HCT116 (cell line): ENCODE measurements at regions of chr7 and their contacts with region 1.

Region 1: DNA sequence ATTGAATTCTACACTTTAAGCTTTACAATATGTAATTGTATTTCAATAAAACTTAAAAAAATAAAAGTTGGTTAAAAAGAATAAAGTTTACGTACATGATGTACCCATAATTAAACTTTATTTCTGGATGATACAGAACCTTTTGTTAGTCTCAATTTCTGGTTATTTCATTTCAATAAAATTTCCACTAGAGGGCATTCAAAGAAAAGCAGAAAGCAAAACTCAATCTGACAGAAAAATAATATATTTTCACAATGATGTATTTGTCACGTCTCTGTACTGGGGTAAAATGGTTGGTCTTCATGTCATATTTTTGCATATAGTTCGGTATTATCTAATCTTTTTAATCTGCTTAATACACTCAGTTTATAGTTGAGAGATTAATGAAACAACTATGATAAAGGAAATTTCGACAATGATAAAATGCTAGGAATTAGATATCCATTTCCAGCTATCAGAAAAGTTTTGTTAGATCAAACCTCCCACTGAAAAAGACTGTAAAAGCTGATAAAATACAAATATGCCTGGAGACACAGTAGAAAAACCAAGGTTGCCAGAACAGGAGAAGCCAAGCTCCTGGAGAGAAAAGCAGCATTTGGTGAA is 27.4 kb downstream of the ASZ1 start:
- DNase-seq: no peak
- ATAC-seq: no peak; the same call in 1 of the 2 replicates
- H3K4me3 ChIP-seq: no peak overlapping the region
- H3K27ac ChIP-seq: no peak overlapping the region
- H3K4me1 ChIP-seq: no peaks in the 10 kb centered on the region
- H3K27me3 ChIP-seq: no peaks in the 10 kb centered on the region
- CTCF ChIP-seq: peak; percentile 26 to 65 (median 59); a peak in 4 of 6 replicates
- POLR2A ChIP-seq: no peak
- RAD21 ChIP-seq: peak; percentile 76

Region 2: DNA sequence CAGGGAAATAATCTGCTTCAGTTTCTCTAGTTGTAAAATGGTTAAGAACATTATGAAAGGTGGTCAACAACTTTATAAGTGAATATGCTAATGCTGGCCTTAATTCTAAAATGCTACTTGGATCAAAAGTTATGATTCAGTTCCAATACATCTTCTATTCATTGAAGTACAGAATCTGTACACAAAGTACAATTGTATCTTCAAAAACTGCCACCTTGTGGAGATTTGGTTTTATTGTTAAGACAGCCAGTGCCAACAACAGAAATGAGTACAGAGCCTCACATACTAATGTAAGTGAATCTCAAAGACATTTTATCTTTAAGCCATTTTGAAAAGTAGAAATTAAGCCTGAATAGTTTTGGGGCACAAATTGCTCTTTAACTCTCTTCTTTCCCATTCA is 273.9 kb after region 1 on chr7:
- CTCF ChIA-PET with region 1: no interaction called
- POLR2A ChIA-PET with region 1: no interaction called
- RAD21 ChIA-PET with region 1: interaction called in 1 of 2 experiments, 3 read pairs
- intact Hi-C with region 1: loop called (anchors 2 kb)
- DNase-seq: peak; percentile 24
- ATAC-seq: peak; percentile 77
- H3K4me3 ChIP-seq: no peak overlapping the region
- H3K27ac ChIP-seq: no peak overlapping the region
- H3K4me1 ChIP-seq: no peaks in the 10 kb centered on the region
- H3K27me3 ChIP-seq: no peaks in the 10 kb centered on the region
- CTCF ChIP-seq: peak; percentile 31 to 54 (median 51); a peak in 4 of 6 replicates
- POLR2A ChIP-seq: no peak
- RAD21 ChIP-seq: peak; percentile 56

Region 3: DNA sequence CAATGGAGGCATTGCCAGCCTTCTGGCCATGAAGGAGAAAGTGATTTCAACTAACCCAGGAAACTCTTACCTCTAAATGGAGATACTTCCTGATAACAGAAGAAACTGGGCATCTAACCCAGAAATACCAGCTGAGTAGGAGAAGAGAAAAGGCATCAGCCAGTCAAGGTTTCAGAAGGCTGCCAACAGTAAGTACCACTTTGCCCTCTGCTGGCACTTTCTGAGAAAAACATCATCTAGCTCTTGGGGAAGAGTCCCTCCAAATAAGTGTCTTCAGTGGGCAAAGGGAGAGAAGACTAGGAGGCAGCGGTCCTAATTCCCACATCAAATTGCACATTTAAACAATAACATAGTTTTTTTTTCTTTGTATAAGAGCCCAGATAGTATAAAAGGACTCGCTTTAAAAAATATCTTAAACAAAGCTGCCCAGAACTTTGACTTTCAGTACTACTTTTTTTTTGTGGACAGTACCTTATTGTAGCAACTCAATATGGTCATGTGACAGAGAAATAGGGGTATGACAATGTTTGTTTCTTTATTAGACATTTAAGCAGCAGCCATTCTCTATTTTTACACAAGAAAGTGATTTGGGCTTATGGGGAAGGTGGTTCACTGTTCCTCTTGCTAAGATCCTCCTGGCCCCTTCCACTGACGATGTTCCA is 316.0 kb after region 1 on chr7:
- CTCF ChIA-PET with region 1: interaction called, 18 read pairs
- POLR2A ChIA-PET with region 1: no interaction called
- RAD21 ChIA-PET with region 1: interaction called in 1 of 2 experiments, 3 read pairs
- intact Hi-C with region 1: loop called (anchors 1 kb)
- DNase-seq: peak; percentile 26
- ATAC-seq: peak; percentile 85
- H3K4me3 ChIP-seq: no peak overlapping the region
- H3K27ac ChIP-seq: no peak overlapping the region
- H3K4me1 ChIP-seq: no peaks in the 10 kb centered on the region
- H3K27me3 ChIP-seq: no peaks in the 10 kb centered on the region
- CTCF ChIP-seq: peak; percentile 62 to 69 (median 64); a peak in 5 of 6 replicates
- POLR2A ChIP-seq: no peak
- RAD21 ChIP-seq: peak; percentile 75

Region 4: GRCh38 chr7:118153551-118154177 is 753.7 kb after region 1 on chr7:
- CTCF ChIA-PET with region 1: interaction called, 6 read pairs
- POLR2A ChIA-PET with region 1: no interaction called
- RAD21 ChIA-PET with region 1: no interaction called
- intact Hi-C with region 1: loop called (anchors 2 kb)
- DNase-seq: peak; percentile 28
- ATAC-seq: peak; percentile 54; the same call in 1 of the 2 replicates
- H3K4me3 ChIP-seq: no peak overlapping the region
- H3K27ac ChIP-seq: no peak overlapping the region
- H3K4me1 ChIP-seq: no peaks in the 10 kb centered on the region
- H3K27me3 ChIP-seq: no peaks in the 10 kb centered on the region
- CTCF ChIP-seq: peak; percentile 47 to 83 (median 61); a peak in 5 of 6 replicates
- POLR2A ChIP-seq: no peak
- RAD21 ChIP-seq: peak; percentile 74

Region 5: DNA sequence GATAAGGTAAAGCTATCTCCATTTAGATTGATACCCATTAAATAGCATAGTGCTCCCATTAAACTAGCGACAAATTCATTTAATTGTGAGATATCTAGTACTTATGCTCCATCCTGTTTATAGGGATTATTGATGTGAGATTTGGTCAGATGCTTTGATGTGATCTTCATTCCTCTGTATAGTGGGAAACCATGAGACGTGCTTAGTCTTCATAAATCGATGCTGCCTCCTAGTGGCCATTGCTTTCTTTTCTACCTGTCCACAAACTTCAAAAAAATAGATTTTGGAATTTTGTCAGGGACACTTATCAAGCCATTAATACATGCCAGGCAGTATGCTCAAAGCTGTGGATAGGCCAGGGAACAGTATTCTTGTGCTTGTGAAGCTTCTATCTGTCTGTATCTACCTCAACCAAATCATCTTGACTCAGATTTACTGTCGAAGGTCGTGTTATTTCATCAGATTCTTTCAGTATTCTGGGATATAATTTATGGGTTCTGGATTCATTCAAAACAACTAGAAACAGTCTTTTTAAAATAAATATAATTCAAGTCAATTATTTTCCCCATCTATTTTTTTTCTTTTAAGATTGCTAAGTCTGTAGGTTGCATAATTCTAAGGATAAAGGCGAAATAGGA is 796.0 kb after region 1 on chr7:
- CTCF ChIA-PET with region 1: no interaction called
- POLR2A ChIA-PET with region 1: no interaction called
- RAD21 ChIA-PET with region 1: no interaction called
- intact Hi-C with region 1: loop called (anchors 5 kb)
- DNase-seq: peak; percentile 64
- ATAC-seq: peak; percentile 90
- H3K4me3 ChIP-seq: no peak overlapping the region
- H3K27ac ChIP-seq: no peak overlapping the region
- H3K4me1 ChIP-seq: no peaks in the 10 kb centered on the region
- H3K27me3 ChIP-seq: no peaks in the 10 kb centered on the region
- CTCF ChIP-seq: peak; percentile 36 to 87 (median 62); a peak in 5 of 6 replicates
- POLR2A ChIP-seq: no peak
- RAD21 ChIP-seq: peak; percentile 63